Colonic mucosa (tissue), 4 donors: ENCODE measurements at regions of chr11 and their contacts with region 1.

Region 1: DNA sequence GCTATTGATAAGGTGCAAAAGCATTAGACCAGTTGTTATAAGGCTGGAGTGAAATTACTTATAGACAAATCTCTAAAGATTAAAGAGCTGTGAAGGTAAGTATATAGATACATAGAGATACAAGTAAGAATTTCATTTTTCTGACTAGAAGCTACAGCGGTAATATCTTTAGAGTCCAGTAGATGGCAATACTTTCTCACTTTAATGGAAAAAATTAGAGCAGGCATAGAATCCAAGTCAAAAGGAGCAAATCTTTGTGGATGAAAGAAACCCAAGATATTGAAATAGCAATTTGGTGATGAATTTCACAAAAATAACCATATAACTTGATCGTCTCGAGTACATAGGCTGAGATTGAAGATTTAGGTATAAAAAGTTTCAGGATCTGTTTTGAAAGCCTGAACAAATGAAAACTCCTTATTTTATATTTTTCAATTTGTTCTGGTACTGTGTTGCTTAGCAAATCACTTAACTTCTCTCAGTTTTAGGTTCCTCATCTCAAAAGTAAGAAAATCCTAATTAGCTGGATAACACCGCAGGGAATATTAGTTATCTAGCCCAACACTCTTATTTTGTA is 81.9 kb downstream of the UVRAG start:
- DNase-seq: no peak
- H3K4me3 ChIP-seq: no peak overlapping the region
- H3K27ac ChIP-seq: no peak overlapping the region
- H3K4me1 ChIP-seq: no peaks in the 10 kb centered on the region
- H3K27me3 ChIP-seq: no peaks in the 10 kb centered on the region
- CTCF ChIP-seq: peak; percentile 67

Region 2: DNA sequence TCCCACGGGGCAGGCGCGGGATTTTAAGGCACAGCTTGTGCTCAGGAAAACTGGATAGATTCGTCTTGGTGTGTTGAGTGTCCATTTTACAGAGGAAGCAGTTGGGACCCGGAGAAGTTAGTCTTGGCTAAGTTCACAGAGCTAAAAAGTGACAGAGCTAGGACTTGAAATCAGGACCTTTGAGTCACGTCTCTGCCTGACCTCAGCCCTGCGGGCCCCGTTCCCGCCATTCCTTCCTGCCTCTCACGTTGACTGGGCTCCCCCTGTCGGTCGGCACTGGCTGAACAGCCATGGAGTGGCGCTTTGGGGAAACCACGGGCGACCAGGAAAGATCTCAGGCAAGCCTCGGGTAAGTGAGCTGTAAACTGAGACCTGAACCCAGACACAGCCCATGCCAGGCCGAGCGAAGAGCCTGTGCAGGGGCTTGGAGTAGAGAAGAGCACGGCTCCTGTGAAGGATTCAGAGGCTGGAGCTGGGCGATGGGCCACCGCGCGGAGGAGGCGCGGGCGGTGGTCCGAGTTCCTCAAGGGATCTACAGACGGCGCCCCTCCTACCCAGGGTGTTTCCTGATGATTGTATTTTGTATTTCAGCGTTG is 255.3 kb after region 1 on chr11:
- intact Hi-C with region 1: loop called (anchors 2 kb)
- DNase-seq: peak; percentile 94
- H3K4me3 ChIP-seq: peak overlapping the region; percentile 25
- H3K27ac ChIP-seq: peak overlapping the region; percentile 86
- H3K4me1 ChIP-seq: peaks cover 7% of the 10 kb centered on the region
- H3K27me3 ChIP-seq: no peaks in the 10 kb centered on the region
- CTCF ChIP-seq: peak; percentile 96